Activated naive CD4-positive, alpha-beta T cell treated with anti-CD3 and anti-CD28 coated beads, Interleukin-2, amount 10 ng/mL, durations not matched to agents 7 days and 5 days (primary cell): ENCODE measurements at regions of chr12 and their contacts with region 1.

Region 1: DNA sequence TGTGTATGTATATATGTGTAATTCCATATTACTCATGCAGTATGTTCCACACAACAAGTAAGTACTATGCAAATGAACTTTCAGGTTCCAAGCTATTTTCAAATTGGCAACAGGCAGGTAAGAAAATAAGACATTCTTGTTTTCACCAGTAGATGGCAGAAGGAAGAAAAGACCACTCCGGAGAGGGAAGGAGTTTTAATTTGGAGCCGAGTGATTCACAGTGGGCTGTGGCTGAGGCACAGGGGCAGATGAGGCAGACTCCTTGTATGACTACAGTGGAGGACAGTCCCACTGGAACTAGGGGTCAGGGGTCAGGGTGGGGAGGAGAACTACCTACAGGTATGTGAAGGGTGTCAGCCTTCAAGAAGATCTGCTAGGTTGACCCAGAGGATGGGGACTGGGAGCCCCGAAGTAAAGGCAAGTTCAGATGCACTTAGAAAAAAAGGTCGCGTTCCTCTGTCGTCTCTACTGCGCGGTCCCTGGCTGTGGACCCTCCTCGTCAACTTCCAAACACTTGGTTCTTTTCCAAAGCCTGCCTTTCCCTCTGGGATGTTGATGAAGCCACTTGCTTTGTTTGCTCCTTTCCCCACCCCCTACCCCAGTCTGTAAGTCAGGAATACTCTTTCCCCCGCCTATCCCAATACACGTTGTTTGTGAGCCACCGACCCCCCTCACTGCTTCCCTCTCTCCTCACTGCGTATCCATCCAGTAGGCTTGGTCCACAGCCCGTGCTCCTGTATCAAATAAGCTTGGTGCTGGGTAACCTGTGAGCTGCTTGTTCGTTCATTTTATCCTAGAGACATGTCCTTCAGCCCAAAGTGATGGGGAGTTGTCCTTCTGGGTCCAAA is 24.1 kb downstream of the DDX47 start:
- DNase-seq: peak; percentile 54
- H3K4me3 Mint-ChIP-seq: no peak overlapping the region
- H3K27ac Mint-ChIP-seq: peak overlapping the region; percentile 69
- H3K4me1 Mint-ChIP-seq: peaks cover 33% of the 10 kb centered on the region
- H3K27me3 Mint-ChIP-seq: no peaks in the 10 kb centered on the region

Region 2: DNA sequence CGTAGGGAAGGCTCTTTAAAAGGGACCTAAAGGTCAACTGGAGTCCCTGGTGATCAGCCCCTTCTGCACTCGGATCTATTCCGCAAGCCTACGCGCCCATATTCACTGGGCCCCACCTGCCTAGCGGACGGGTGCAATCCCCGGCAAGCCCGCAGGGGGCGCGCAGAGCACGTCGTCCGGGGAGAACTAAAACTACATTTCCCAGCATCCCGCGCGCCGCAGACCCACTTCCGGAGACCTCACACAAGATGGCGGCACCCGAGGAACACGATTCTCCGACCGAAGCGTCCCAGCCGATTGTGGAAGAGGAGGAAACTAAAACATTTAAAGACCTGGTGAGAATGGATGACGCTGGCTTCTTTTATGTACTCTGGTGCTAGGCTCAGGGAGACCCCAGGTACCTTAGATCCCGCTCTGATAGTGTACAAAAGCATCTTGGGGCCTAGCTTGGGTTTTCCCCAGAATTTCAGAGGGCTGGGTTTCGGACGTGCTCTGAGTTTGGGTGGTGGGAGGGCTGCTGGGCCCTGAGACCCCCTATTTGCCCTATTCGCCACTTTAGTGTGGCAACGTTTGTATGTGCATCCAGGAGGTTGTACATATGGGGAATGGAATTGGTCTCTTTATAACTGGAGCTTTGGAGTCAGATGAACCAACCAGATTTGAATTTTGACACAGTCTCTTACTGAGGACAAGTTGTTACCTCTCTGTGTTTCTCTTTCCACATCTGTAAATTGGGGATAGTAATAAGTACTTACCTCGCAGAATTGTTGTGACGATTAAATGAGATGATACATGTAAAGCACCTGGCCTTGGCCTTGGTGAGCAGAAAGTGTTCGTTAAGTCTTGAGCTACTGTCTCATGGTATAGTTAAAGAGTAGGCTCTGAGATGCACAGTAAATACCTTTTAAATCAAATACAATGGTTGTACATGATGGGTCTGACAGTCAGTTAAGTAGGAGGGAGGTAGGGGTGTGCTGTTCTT is 23.8 kb before region 1 on chr12 and contains the start of gene DDX47:
- CTCF ChIA-PET with region 1: interaction called, 22 read pairs
- DNase-seq: peak; percentile 98
- H3K4me3 Mint-ChIP-seq: peak within 1 kb of the TSS; percentile 83
- H3K27ac Mint-ChIP-seq: peak within 1 kb of the TSS; percentile 83
- H3K4me1 Mint-ChIP-seq: peaks cover 78% of the 10 kb centered on the region
- H3K27me3 Mint-ChIP-seq: no peaks in the 10 kb centered on the region

Region 3: DNA sequence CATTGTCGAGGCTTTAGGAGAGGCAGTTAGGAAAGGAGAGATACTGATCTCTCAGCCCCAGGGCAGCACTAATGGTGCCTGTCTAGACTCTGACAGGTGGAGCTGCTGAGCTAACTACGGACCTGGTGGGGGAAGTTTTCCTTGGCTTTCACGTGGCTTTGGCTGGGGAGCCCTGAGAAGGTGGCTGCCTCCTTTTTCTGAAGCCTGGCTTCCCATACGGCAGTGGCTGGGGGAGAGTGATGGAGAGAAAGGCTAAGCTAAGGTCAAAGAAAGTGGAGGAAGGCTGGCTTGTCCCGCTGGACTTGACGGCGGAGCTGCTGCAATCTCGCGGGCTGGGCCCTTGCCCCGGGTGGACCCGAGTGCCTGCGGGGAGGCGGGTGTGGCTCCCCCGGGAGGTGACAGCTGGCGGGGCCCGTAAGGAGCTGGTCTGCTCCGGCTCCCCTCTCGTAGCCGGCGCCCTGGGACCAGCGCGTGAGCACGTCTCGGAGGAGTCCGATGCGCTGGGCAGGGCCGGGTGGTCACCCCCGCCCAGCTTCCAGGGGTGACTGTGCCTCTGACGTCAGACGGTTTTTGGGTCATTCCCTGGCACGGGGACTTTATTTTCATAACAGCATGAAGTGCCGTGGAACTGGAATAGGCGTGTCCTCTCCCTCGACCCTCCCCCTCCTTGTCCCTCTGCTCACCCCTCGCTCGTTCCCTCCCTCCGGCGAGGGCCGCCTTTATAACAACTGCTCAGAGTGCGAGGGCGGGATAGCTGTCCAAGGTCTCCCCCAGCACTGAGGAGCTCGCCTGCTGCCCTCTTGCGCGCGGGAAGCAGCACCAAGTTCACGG is 53.8 kb after region 1 on chr12 and contains the start of gene GPRC5A:
- CTCF ChIA-PET with region 1: interaction called, 15 read pairs
- DNase-seq: peak; percentile 60
- H3K4me3 Mint-ChIP-seq: peak within 1 kb of the TSS; percentile 69
- H3K27ac Mint-ChIP-seq: no peak within 1 kb of the TSS
- H3K4me1 Mint-ChIP-seq: peaks cover 15% of the 10 kb centered on the region
- H3K27me3 Mint-ChIP-seq: peaks cover 50% of the 10 kb centered on the region